Posterior vena cava (tissue), 2 donors: ENCODE measurements at regions of chr3 and their contacts with region 1.

Region 1: GRCh38 chr3:168213920-168214319 is 118.2 kb upstream of the GOLIM4 start:
- DNase-seq: no peak

Region 2: DNA sequence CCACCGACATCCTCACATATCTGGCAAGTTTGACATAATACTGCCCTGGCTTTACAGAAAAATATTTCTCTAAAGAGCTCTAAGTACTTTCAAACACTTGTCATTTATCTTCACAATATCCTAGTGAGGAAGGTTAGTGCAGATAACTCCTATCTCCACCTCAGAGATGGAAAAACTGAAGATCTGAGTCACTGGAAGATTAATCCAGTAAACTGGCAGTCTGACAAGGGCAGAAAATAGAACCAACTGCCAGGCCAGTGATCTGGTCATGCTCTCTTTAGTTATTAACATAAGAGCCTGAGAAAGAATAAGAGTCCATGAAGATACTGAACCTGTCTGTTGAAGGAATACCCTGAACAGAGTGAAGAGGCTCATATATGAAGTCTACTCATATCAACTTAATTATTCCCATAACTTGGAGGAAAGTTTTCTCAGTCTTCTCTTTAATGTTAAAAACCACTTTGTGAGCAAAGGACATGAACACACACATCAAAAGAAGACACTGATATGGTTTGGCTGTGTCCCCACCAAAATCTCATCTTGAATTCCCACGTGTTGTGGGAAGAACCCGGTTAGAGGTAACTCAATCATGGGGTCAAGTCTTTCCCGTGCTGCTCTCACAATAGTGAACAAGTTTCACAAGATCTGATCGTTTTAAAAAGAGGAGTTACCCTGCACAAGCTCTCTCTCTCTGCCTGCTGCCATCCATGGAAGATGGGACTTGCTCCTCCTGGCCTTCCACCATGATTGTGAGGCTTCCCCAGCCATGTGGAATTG is 179.6 kb before region 1 on chr3:
- intact Hi-C with region 1: no loop called
- DNase-seq: no peak

Region 3: GRCh38 chr3:168051531-168052471 is 162.1 kb before region 1 on chr3:
- intact Hi-C with region 1: no loop called
- DNase-seq: no peak

Region 4: GRCh38 chr3:168847291-168847883 is 633.5 kb after region 1 on chr3:
- intact Hi-C with region 1: loop called (anchors 5 to 10 kb)
- DNase-seq: no peak